ENCODE measurements at regions of chr3 and their contacts with region 1.

Region 1: GRCh38 chr3:13479581-13480339 is at the start of gene HDAC11:
- DNase-seq: peak; percentile 97
- H3K4me3 ChIP-seq: peak within 1 kb of the TSS; percentile 59 to 93 (median 82)
- H3K27ac ChIP-seq: peak within 1 kb of the TSS; percentile 76
- H3K4me1 ChIP-seq: peaks cover 3% of the 10 kb centered on the region
- H3K27me3 ChIP-seq: no peaks in the 10 kb centered on the region
- CTCF ChIP-seq: peak in 1 of 2 donors; percentile 33
- POLR2A ChIP-seq: no peak
- total RNA-seq, gene HDAC11: 8.3 and 8.8 TPM in 2 replicates

Region 2: DNA sequence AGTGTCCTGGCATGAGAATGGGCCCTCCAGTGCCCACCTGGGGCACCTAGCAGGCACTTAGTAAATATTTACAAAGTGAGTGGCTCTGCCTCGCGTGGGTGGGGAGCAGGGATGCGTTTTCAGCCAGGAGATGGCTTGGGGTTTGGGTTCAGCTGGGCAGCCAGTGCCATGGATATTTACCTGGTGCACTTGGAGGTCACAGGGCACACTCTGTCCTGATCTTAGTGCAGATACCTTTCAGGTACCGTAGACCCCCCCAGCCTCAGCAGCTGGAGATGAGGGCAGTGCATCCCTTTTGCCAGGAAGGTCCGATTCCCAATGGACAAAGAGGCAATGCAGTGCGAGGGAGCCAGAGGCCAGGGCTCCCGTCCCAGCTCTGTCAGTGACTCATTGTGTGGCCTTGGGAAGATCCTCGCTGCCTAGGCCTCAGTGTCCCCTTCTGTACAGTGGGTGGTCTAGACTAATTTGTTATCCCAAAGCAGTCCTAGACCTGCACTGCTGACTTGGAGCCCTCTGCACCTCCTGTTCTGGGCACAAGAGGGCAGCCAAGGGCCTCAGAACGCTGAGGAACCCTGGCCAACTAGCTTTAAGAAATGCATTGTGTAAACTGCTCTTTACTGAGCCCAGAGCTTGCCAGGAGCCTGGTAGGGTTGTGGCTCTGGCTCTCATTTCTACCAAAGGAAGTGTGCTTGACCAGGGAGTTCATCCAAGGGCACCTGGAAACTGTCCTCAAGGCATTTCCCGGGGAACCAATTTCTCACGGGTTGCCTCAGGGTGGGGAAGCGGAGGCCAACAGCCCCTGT is 16.4 kb after region 1 on chr3:
- CTCF ChIA-PET with region 1: interaction called, 28 read pairs
- POLR2A ChIA-PET with region 1: no interaction called
- dilution Hi-C with region 1: no loop called
- intact Hi-C with region 1: no loop called
- DNase-seq: peak; percentile 73
- H3K4me3 ChIP-seq: no peak overlapping the region
- H3K27ac ChIP-seq: no peak overlapping the region
- H3K4me1 ChIP-seq: no peaks in the 10 kb centered on the region
- H3K27me3 ChIP-seq: no peaks in the 10 kb centered on the region
- CTCF ChIP-seq: peak; percentile 87 to 89
- POLR2A ChIP-seq: no peak

Region 3: DNA sequence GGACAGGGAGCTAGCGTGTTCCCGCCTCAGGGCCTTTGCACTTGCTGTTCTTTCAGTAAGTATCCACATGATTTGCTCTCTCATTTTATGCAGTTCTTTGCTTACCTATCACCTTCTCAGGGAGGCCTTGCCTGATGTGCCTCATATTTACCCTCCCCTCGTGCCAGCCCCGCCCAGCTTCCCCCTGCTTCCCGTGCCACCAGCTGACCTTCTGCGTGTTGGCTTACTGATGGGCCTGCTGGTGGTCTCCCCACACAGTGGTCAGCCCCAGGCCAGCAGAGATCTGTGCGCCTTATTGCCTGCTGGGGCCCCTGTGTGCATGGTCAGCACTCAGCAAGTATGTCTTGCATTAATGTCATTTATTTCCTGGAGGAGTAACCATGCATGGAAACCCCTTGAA is 43.3 kb after region 1 on chr3:
- CTCF ChIA-PET with region 1: no interaction called
- POLR2A ChIA-PET with region 1: no interaction called
- dilution Hi-C with region 1: no loop called
- intact Hi-C with region 1: no loop called
- DNase-seq: no peak
- H3K4me3 ChIP-seq: no peak overlapping the region
- H3K27ac ChIP-seq: no peak overlapping the region
- H3K4me1 ChIP-seq: no peaks in the 10 kb centered on the region
- H3K27me3 ChIP-seq: no peaks in the 10 kb centered on the region
- CTCF ChIP-seq: no peak
- POLR2A ChIP-seq: no peak

Region 4: GRCh38 chr3:13884851-13885703 is 405.3 kb after region 1 on chr3:
- CTCF ChIA-PET with region 1: no interaction called
- POLR2A ChIA-PET with region 1: no interaction called
- dilution Hi-C with region 1: no loop called
- intact Hi-C with region 1: loop called (anchors 10 kb)
- DNase-seq: no peak
- H3K4me3 ChIP-seq: no peak overlapping the region
- H3K27ac ChIP-seq: no peak overlapping the region
- H3K4me1 ChIP-seq: no peaks in the 10 kb centered on the region
- H3K27me3 ChIP-seq: peaks cover 16% of the 10 kb centered on the region in 2 experiments
- CTCF ChIP-seq: peak; percentile 55 to 59
- POLR2A ChIP-seq: no peak

Measured in endothelial cell of umbilical vein (primary cell).